Sciatic nerve (tissue), 2 donors: ENCODE measurements at regions of chr19 and their contacts with region 1.

Region 1: GRCh38 chr19:48608798-48609263 is 2.3 kb downstream of the SPACA4 start:
- DNase-seq: no peak
- ATAC-seq: peak; percentile 30

Region 2: DNA sequence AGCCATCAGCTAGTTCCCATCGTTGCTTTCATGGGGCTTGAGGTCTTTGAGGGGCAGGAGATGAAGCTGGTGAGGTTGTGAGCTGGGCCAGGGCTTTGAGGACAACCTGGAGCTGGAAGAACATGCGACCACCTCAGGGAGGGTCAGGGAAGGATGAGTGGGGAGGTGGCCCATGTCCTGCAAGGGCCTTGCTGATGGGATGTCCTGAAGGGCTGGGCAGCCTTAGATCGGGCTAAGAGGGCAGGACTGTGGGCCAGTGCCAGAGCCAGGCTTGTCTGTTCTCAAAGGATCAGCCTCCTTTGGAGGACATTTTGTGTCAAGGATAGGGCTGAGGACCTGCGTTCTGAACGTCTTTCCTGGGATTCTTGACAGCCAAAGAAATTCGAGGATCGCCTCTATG is 129.1 kb before region 1 on chr19:
- intact Hi-C with region 1: loop called (anchors 10 kb)
- DNase-seq: no peak
- ATAC-seq: peak; percentile 22